ENCODE measurements at regions of chr7 and their contacts with region 1.

Region 1: GRCh38 chr7:7968543-7969305 is at the start of gene GLCCI1:
- DNase-seq: peak; percentile 98
- H3K4me3 Mint-ChIP-seq: peak within 1 kb of the TSS; percentile 85
- H3K27ac Mint-ChIP-seq: peak within 1 kb of the TSS; percentile 83
- H3K4me1 Mint-ChIP-seq: peaks cover 17% of the 10 kb centered on the region
- H3K27me3 Mint-ChIP-seq: no peaks in the 10 kb centered on the region
- total RNA-seq, gene GLCCI1: 8.6 to 11.5 TPM

Region 2: GRCh38 chr7:7566651-7567611 is 401.8 kb before region 1 on chr7 and contains the start of gene MIOS:
- CTCF ChIA-PET with region 1: no interaction called
- POLR2A ChIA-PET with region 1: no interaction called
- intact Hi-C with region 1: loop called (anchors 2 kb)
- DNase-seq: peak; percentile 85
- H3K4me3 Mint-ChIP-seq: peak within 1 kb of the TSS; percentile 81
- H3K27ac Mint-ChIP-seq: peak within 1 kb of the TSS; percentile 75
- H3K4me1 Mint-ChIP-seq: peaks cover 29% of the 10 kb centered on the region
- H3K27me3 Mint-ChIP-seq: no peaks in the 10 kb centered on the region
- total RNA-seq, gene MIOS: 37.2 to 37.7 TPM

Region 3: DNA sequence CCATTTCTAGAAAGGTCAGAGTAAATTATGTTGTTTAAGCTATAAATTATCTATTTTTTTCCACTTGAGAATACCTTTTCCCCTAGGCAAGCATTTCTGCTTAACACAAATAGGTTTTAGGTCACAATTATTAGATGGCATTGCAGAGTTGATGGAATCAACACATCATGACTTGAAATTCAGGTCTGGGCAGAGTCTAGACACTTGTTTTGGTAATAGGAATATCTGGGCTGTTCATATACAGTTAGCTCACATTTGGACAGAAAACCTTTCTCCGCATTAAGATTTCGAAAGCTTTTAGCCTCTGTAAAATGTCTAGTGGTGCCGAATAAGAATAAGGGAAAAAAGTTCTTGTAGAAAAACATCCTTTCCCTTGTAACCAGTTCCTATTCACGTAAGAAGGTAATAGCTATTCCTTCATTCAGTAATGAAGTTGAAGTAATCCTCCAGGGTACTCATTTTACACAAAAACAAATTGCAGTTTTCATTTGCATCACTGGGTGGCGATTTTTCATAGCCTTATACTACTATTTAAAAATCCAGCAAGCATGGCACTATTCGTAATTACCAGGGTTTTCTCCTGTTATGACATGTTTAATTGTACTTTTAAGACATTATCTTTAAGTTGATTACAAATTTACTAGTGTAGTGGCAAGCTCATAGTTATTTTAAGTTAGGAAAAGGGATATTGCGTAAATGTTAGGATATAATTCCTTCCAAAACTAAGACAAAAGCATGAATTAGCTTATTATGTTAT is 287.4 kb before region 1 on chr7:
- CTCF ChIA-PET with region 1: interaction called, 4 read pairs
- POLR2A ChIA-PET with region 1: no interaction called
- intact Hi-C with region 1: loop called (anchors 2 kb)
- DNase-seq: no peak
- H3K4me3 Mint-ChIP-seq: no peak overlapping the region
- H3K27ac Mint-ChIP-seq: peak overlapping the region; percentile 52
- H3K4me1 Mint-ChIP-seq: peaks cover 30% of the 10 kb centered on the region
- H3K27me3 Mint-ChIP-seq: no peaks in the 10 kb centered on the region

Region 4: GRCh38 chr7:7816084-7816483 is 152.6 kb before region 1 on chr7:
- CTCF ChIA-PET with region 1: no interaction called
- POLR2A ChIA-PET with region 1: no interaction called
- intact Hi-C with region 1: loop called (anchors 5 kb)
- DNase-seq: no peak
- H3K4me3 Mint-ChIP-seq: no peak overlapping the region
- H3K27ac Mint-ChIP-seq: no peak overlapping the region
- H3K4me1 Mint-ChIP-seq: peaks cover 39% of the 10 kb centered on the region
- H3K27me3 Mint-ChIP-seq: no peaks in the 10 kb centered on the region

Region 5: DNA sequence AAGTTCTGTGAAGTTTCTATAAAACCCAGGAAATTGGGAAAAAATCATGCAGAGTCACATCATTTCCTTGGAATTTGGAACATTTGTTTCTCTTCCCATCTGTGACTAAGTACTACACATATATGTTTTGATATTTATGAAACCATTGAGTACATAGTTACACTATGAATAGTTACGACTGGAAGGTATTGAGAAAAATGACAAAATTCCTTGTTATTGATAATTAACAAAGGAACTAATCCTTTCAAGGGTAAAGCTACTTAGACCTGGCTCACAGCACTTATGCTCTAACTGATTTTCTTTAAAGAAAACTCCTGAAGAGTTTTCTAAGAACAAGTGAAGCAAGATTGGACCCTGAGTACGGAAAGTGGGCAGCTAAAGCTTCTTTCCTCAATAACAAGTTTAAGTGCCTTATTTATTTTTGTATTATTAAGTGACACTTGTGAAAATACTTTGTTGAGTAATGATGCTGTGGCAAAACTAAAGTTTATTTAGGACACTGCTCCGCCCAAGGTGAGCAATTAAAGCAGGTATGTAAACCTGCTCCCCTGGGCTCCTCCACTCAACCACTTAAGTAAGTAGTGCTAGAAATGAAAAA is 12.1 kb before region 1 on chr7:
- CTCF ChIA-PET with region 1: no interaction called
- POLR2A ChIA-PET with region 1: no interaction called
- intact Hi-C with region 1: no loop called
- DNase-seq: no peak
- H3K4me3 Mint-ChIP-seq: no peak overlapping the region
- H3K27ac Mint-ChIP-seq: no peak overlapping the region
- H3K4me1 Mint-ChIP-seq: no peaks in the 10 kb centered on the region
- H3K27me3 Mint-ChIP-seq: no peaks in the 10 kb centered on the region

Region 6: GRCh38 chr7:7989133-7989984 is 20.6 kb after region 1 on chr7:
- CTCF ChIA-PET with region 1: interaction called, 4 read pairs
- POLR2A ChIA-PET with region 1: interaction called, 4 read pairs
- intact Hi-C with region 1: loop called (anchors 2 kb)
- DNase-seq: no peak
- H3K4me3 Mint-ChIP-seq: peak overlapping the region; percentile 68
- H3K27ac Mint-ChIP-seq: peak overlapping the region; percentile 55
- H3K4me1 Mint-ChIP-seq: peaks cover 56% of the 10 kb centered on the region
- H3K27me3 Mint-ChIP-seq: no peaks in the 10 kb centered on the region

Region 7: GRCh38 chr7:8125680-8126444 is 157.1 kb after region 1 on chr7:
- CTCF ChIA-PET with region 1: interaction called, 3 read pairs
- POLR2A ChIA-PET with region 1: interaction called, 5 read pairs
- intact Hi-C with region 1: loop called (anchors 1 kb)
- DNase-seq: peak; percentile 89
- H3K4me3 Mint-ChIP-seq: peak overlapping the region; percentile 66
- H3K27ac Mint-ChIP-seq: peak overlapping the region; percentile 92
- H3K4me1 Mint-ChIP-seq: peaks cover 78% of the 10 kb centered on the region
- H3K27me3 Mint-ChIP-seq: no peaks in the 10 kb centered on the region

Region 8: GRCh38 chr7:8190119-8190895 is 221.6 kb after region 1 on chr7:
- CTCF ChIA-PET with region 1: interaction called, 11 read pairs
- POLR2A ChIA-PET with region 1: no interaction called
- intact Hi-C with region 1: no loop called
- DNase-seq: peak; percentile 63
- H3K4me3 Mint-ChIP-seq: no peak overlapping the region
- H3K27ac Mint-ChIP-seq: no peak overlapping the region
- H3K4me1 Mint-ChIP-seq: peaks cover 13% of the 10 kb centered on the region
- H3K27me3 Mint-ChIP-seq: no peaks in the 10 kb centered on the region

Region 9: DNA sequence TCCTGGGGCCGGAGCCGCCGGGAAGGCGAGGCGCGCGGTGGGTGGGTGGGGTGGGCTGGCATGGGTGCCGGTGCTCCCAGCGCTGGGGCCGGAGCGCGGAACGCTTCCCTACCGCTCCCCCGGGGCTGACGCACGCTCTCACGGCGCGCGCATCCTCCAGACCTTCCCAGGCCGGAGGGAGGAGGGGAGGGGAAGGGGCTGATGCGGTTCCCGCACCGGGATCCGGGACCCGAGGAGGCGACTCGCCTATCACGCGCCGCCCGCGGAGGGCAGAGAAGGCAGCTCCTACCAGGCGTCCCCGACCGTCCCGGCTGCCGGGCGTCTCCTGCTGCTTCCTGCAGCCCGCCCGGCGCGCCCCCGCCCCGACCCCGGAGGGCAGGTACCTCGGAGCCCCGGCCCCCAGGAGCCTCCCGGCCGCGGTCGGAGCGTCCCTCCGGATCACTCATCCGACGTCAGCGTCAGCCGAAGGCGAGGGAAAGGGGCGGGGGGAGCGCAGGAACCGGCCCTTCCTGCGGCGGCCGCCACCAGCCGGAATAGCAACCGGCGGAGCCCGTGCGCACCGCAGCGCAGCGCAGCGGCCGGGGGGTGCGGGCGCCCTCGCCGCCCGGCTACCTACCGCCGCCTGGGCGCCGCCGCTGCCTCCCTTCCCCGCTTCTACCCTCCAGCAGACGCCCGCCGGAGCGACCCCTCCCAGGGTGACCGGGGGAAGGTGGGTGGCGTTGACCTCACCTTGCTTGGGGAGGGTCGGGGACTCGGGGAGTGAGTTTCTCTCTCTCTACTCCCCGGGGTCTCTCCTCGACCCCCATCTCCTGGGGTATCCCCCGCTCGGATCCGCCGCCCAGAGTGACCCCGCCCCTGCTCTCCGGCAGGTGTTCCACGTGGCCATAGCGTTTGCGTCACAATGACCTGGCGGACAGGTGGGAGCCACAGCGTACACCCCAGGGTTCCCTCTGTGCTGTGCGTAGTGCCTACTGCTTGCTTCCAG is 293.3 kb after region 1 on chr7 and contains the start of gene ICA1:
- CTCF ChIA-PET with region 1: no interaction called
- POLR2A ChIA-PET with region 1: no interaction called
- intact Hi-C with region 1: no loop called
- DNase-seq: peak; percentile 48
- H3K4me3 Mint-ChIP-seq: peak within 1 kb of the TSS; percentile 73
- H3K27ac Mint-ChIP-seq: peak within 1 kb of the TSS; percentile 16
- H3K4me1 Mint-ChIP-seq: peaks cover 6% of the 10 kb centered on the region
- H3K27me3 Mint-ChIP-seq: peaks cover 48% of the 10 kb centered on the region
- total RNA-seq, gene ICA1: 2.3 to 2.4 TPM

Measured in activated CD4-positive, alpha-beta memory T cell treated with anti-CD3 and anti-CD28 coated beads for 36 hours (primary cell).